ENCODE measurements at regions of chr13 and their contacts with region 1.

Region 1: GRCh38 chr13:34462843-34463242 is 479.2 kb upstream of the NBEA start:
- DNase-seq: peak; percentile 42
- H3K4me3 Mint-ChIP-seq: no peak overlapping the region
- H3K27ac Mint-ChIP-seq: peak overlapping the region; percentile 58
- H3K4me1 Mint-ChIP-seq: peaks cover 31% of the 10 kb centered on the region
- H3K27me3 Mint-ChIP-seq: no peaks in the 10 kb centered on the region
- CTCF ChIP-seq: no peak

Region 2: DNA sequence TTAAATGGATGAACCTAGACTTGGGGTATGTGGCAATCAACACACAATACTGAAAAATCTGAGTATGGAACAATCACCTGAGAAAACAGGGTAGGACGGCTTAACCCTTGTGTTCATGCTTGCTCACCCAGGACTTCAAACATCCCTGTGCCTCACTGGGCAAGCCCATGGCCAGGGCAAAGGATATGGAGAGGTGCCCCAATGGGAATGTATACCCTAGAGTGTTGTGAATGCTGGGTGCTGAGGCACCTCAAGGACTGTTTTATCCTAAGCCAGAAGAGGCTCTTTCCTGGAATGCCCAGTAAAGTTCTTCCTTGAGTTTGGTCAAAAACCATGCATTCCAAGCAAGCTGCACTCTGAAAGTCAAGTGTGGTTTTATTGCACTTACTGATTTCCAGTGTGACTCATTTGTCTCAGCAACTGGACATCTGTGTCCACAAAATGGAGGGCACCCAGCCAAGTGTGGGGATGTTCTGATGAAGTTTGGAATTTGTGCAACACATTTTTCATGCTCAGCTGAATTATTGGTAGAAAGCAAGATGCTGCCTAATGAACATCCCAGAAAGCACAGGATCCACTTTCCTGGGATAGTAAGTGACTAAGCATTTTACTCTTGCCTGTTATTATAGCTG is 113.6 kb before region 1 on chr13:
- CTCF ChIA-PET with region 1: interaction called, 4 read pairs
- intact Hi-C with region 1: loop called (anchors 10 kb)
- DNase-seq: peak; percentile 22
- H3K4me3 Mint-ChIP-seq: no peak overlapping the region
- H3K27ac Mint-ChIP-seq: no peak overlapping the region
- H3K4me1 Mint-ChIP-seq: peaks cover 41% of the 10 kb centered on the region
- H3K27me3 Mint-ChIP-seq: no peaks in the 10 kb centered on the region
- CTCF ChIP-seq: no peak